CD14-positive monocyte (primary cell): ENCODE measurements at regions of chr11 and their contacts with region 1.

Region 1: GRCh38 chr11:36564376-36565030 is 3.3 kb upstream of the RAG1 start:
- DNase-seq: peak; percentile 8 to 33 (median 20)
- H3K4me3 ChIP-seq: peak overlapping the region in 2 of 3 experiments; percentile 3 to 54
- H3K4me3 Mint-ChIP-seq: peak overlapping the region; percentile 71 to 87
- H3K27ac ChIP-seq: no peak overlapping the region
- H3K27ac Mint-ChIP-seq: no peak overlapping the region
- H3K4me1 ChIP-seq: peaks cover 0 to 4% of the 10 kb centered on the region in 2 donors
- H3K4me1 Mint-ChIP-seq: peaks cover 10% of the 10 kb centered on the region
- H3K27me3 ChIP-seq: no peaks in the 10 kb centered on the region
- H3K27me3 Mint-ChIP-seq: peaks cover 0 to 14% (median 5%) of the 10 kb centered on the region in 3 donors
- CTCF ChIP-seq: peak; percentile 71

Region 2: GRCh38 chr11:36142439-36142838 is 422.1 kb before region 1 on chr11:
- intact Hi-C with region 1: no loop called
- DNase-seq: no peak
- H3K4me3 ChIP-seq: no peak overlapping the region
- H3K4me3 Mint-ChIP-seq: no peak overlapping the region
- H3K27ac ChIP-seq: no peak overlapping the region
- H3K27ac Mint-ChIP-seq: no peak overlapping the region
- H3K4me1 ChIP-seq: no peaks in the 10 kb centered on the region
- H3K4me1 Mint-ChIP-seq: peaks cover 1% of the 10 kb centered on the region
- H3K27me3 ChIP-seq: no peaks in the 10 kb centered on the region
- H3K27me3 Mint-ChIP-seq: peaks cover 0 to 3% (median 2%) of the 10 kb centered on the region in 3 donors
- CTCF ChIP-seq: no peak

Region 3: GRCh38 chr11:36510567-36511020 is 53.9 kb before region 1 on chr11:
- intact Hi-C with region 1: no loop called
- DNase-seq: no peak
- H3K4me3 ChIP-seq: peak overlapping the region; percentile 59 to 94 (median 60)
- H3K4me3 Mint-ChIP-seq: peak overlapping the region; percentile 97 to 98
- H3K27ac ChIP-seq: peak overlapping the region in 1 of 2 donors; percentile 93
- H3K27ac Mint-ChIP-seq: peak overlapping the region in 3 of 7 donors; percentile 95 to 98 (median 96)
- H3K4me1 ChIP-seq: peaks cover 20 to 23% of the 10 kb centered on the region in 2 donors
- H3K4me1 Mint-ChIP-seq: peaks cover 22% of the 10 kb centered on the region
- H3K27me3 ChIP-seq: no peaks in the 10 kb centered on the region
- H3K27me3 Mint-ChIP-seq: peaks cover 0 to 4% (median 0%) of the 10 kb centered on the region in 3 donors
- CTCF ChIP-seq: peak; percentile 69

Region 4: DNA sequence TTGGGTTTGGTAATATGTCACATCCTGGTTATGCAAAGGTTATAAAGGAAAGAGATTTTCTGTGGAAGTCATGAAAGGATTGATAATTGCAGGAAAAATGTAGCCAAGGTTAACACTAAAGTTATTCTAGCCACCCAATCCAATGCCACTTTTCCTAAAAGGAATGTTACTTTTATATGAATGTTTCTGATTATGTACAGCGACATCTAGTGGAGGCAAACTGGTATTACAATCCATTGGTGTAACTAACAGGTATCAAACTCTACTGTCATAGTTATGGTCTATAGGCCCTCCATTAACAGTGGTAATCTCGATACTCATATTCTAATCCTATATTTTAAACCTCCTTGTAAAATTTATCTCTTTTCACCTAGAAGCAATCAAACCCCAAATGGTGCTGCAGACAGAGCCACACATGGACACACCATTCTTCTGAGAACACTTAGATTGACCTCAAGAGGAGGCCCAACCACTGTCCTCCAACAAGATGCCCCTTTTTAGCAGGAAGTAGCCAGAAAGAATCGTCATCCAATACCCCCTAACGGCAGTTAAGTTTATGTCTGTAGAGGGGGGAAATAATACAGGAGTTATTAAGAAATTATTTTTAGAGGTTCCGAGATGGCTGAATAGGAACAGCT is 108.4 kb after region 1 on chr11:
- intact Hi-C with region 1: loop called in 1 of 2 experiments (anchors 10 kb)
- DNase-seq: peak; percentile 3 to 43 (median 35)
- H3K4me3 ChIP-seq: no peak overlapping the region
- H3K4me3 Mint-ChIP-seq: no peak overlapping the region
- H3K27ac ChIP-seq: no peak overlapping the region
- H3K27ac Mint-ChIP-seq: no peak overlapping the region
- H3K4me1 ChIP-seq: no peaks in the 10 kb centered on the region
- H3K4me1 Mint-ChIP-seq: no peaks in the 10 kb centered on the region
- H3K27me3 ChIP-seq: no peaks in the 10 kb centered on the region
- H3K27me3 Mint-ChIP-seq: peaks cover 0 to 2% (median 2%) of the 10 kb centered on the region in 3 donors
- CTCF ChIP-seq: peak; percentile 99

Region 5: GRCh38 chr11:36746886-36747710 is 182.6 kb after region 1 on chr11:
- intact Hi-C with region 1: loop called (anchors 5 kb)
- DNase-seq: peak; percentile 84 to 88 (median 84)
- H3K4me3 ChIP-seq: no peak overlapping the region
- H3K4me3 Mint-ChIP-seq: no peak overlapping the region
- H3K27ac ChIP-seq: no peak overlapping the region
- H3K27ac Mint-ChIP-seq: no peak overlapping the region
- H3K4me1 ChIP-seq: no peaks in the 10 kb centered on the region
- H3K4me1 Mint-ChIP-seq: peaks cover 5% of the 10 kb centered on the region
- H3K27me3 ChIP-seq: peaks cover 0 to 2% of the 10 kb centered on the region in 2 donors
- H3K27me3 Mint-ChIP-seq: peaks cover 7 to 14% (median 9%) of the 10 kb centered on the region in 3 donors
- CTCF ChIP-seq: peak; percentile 98

Region 6: DNA sequence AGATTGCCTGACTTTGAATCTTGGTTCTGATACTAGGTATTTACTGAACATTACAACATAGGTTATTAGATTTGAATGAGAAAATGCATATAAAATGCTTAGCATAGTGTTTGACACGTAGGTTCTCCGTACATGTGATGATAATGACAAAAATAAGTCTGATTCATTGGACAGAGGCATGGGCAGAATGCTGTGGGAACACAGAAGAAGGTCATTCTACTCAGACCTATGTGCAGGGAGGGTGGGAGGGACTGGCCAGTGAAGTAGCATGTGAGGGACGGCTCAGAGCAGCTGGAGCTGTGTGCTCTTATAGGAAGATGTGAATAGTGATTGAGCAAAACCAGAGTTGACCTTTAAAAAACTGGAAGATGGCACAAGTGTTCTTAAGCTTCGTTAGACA is 290.4 kb after region 1 on chr11:
- intact Hi-C with region 1: no loop called
- DNase-seq: no peak
- H3K4me3 ChIP-seq: no peak overlapping the region
- H3K4me3 Mint-ChIP-seq: no peak overlapping the region
- H3K27ac ChIP-seq: no peak overlapping the region
- H3K27ac Mint-ChIP-seq: no peak overlapping the region
- H3K4me1 ChIP-seq: no peaks in the 10 kb centered on the region
- H3K4me1 Mint-ChIP-seq: no peaks in the 10 kb centered on the region
- H3K27me3 ChIP-seq: no peaks in the 10 kb centered on the region
- H3K27me3 Mint-ChIP-seq: peaks cover 0 to 2% (median 0%) of the 10 kb centered on the region in 3 donors
- CTCF ChIP-seq: no peak